HepG2 (cell line): ENCODE measurements at regions of chr16 and their contacts with region 1.

Region 1: GRCh38 chr16:71572497-71573116 is 4.3 kb downstream of the TAT start:
- DNase-seq: peak; percentile 97
- ATAC-seq: peak; percentile 99
- H3K4me3 ChIP-seq: peak overlapping the region in 2 of 3 experiments; percentile 19 to 20; a peak in 2 of 6 replicates
- H3K27ac ChIP-seq: peak overlapping the region; percentile 91
- H3K4me1 ChIP-seq: peaks cover 83% of the 10 kb centered on the region
- H3K27me3 ChIP-seq: no peaks in the 10 kb centered on the region
- CTCF ChIP-seq: no peak
- EP300 ChIP-seq: peak; percentile 15 to 82; a peak in 3 of 4 replicates
- POLR2A ChIP-seq: peak; percentile 44 to 51; a peak in 2 of 4 replicates
- RAD21 ChIP-seq: peak; percentile 13; the same call in 1 of the 2 replicates

Region 2: GRCh38 chr16:71594000-71594646 is 21.5 kb after region 1 on chr16:
- CTCF ChIA-PET with region 1: no interaction called
- POLR2A ChIA-PET with region 1: interaction called, 48 read pairs
- in situ Hi-C with region 1: no loop called
- intact Hi-C with region 1: loop called (anchors 1 kb)
- DNase-seq: peak; percentile 93
- ATAC-seq: peak; percentile 87
- H3K4me3 ChIP-seq: peak overlapping the region in 2 of 3 experiments; percentile 9 to 23; a peak in 2 of 6 replicates
- H3K27ac ChIP-seq: peak overlapping the region; percentile 92
- H3K4me1 ChIP-seq: peaks cover 90% of the 10 kb centered on the region
- H3K27me3 ChIP-seq: no peaks in the 10 kb centered on the region
- CTCF ChIP-seq: peak; percentile 25; the same call in 1 of the 2 replicates
- EP300 ChIP-seq: peak in 1 of 2 experiments; percentile 92; a peak in 2 of 4 replicates
- POLR2A ChIP-seq: peak in 1 of 2 experiments; percentile 58; a peak in 1 of 4 replicates
- RAD21 ChIP-seq: 0 out of 2 replicates have a peak, but pooled peaks have one; percentile 18

Region 3: DNA sequence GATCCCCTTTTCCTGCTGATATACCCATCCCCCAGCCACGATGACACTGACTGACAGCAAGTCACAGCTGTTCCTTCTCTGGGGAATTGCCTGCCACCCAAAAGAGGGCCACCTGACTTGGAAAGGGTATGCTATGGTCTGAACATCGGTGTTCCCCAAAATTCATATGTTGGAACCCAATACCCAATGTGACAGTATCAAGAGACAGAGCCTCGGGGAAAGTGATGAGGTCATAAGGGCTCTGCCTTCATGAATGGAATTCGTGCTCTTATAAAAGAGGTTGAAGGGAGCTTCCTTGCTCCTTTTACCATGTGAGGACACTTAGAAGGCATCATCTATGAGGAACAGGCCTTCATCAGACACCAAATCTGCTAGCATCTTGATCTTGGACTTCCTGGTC is 45.8 kb after region 1 on chr16:
- CTCF ChIA-PET with region 1: no interaction called
- POLR2A ChIA-PET with region 1: no interaction called
- in situ Hi-C with region 1: no loop called
- intact Hi-C with region 1: no loop called
- DNase-seq: no peak
- ATAC-seq: no peak
- H3K4me3 ChIP-seq: no peak overlapping the region
- H3K27ac ChIP-seq: no peak overlapping the region
- H3K4me1 ChIP-seq: peaks cover 29% of the 10 kb centered on the region
- H3K27me3 ChIP-seq: 0 out of 5 replicates have a peak, but pooled peaks cover 0 to 2% of the 10 kb centered on the region in 2 experiments
- CTCF ChIP-seq: no peak
- EP300 ChIP-seq: no peak
- POLR2A ChIP-seq: no peak
- RAD21 ChIP-seq: no peak